ENCODE measurements at regions of chr6 and their contacts with region 1.

Region 1: DNA sequence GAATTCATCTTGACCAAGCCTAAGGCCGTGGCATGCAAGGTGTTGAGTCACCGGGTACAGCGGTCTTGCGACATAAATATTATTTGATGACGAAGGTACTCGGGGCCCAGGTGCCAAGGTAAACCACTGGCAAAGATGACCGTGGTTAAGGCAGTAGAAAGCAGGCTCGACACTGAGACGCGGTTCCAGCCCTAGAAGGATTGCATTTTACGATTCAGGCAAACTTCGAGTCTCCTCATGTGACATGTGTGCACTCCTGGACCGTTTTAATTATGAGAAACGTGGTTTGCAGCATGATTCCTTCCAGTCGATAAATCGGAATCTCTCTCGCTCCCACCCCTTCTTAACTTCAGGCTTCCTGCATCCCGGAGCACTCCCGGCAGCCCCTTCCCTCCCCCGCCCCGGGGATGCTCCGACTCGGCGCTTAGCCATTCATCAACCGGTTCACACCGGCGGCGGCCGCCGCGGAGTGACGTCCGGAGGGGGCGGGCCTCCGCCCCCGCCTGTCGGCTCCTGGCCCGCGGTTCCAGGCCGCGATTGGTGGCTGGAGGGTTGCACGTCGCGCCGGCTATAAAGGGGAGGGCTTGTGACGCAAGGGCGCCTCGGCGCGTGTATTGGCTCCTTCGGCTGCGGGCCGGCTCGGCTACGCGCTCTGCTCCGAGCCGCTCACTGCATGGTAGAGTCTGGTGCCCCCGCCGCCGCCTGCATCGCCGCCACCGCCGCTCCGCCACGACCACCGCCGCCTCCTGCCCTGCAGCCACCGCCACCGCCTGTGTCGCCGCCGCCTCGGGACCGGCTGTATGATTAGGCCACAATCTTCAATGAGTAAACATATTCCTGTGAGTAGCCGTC is at the starts of genes LOC128125822 and PTP4A1:
- DNase-seq: peak; percentile 93 to 98
- H3K4me3 ChIP-seq: peak within 1 kb of the TSS; percentile 67
- H3K27ac ChIP-seq: peak within 1 kb of the TSS; percentile 97
- H3K4me1 ChIP-seq: peaks cover 28% of the 10 kb centered on the region
- H3K27me3 ChIP-seq: no peaks in the 10 kb centered on the region
- CTCF ChIP-seq: no peak
- total RNA-seq, gene PTP4A1: 46.4 and 63.8 TPM in 2 replicates

Region 2: DNA sequence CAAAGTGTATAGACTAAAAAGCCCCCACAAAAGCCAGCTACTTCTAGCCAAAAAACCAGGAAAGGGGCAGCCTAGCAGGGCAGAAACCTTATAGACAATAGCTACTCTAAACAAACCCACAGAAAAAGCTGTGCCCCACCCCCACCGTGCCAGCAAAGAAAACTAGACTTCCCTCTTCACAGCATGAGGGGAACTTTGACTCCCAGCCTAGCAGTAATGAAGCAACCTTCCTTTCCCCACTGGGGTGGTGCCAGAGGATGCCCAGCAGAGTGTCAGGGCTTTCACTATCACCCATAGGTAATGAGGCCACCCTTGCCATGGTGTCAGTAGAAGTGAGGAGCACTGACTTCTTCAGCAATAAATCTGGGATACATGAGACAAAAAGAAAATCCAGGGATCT is 153.4 kb before region 1 on chr6:
- CTCF ChIA-PET with region 1: no interaction called
- POLR2A ChIA-PET with region 1: no interaction called
- intact Hi-C with region 1: loop called (anchors 10 kb)
- DNase-seq: no peak
- H3K4me3 ChIP-seq: no peak overlapping the region
- H3K27ac ChIP-seq: no peak overlapping the region
- H3K4me1 ChIP-seq: no peaks in the 10 kb centered on the region
- H3K27me3 ChIP-seq: no peaks in the 10 kb centered on the region
- CTCF ChIP-seq: no peak

Region 3: GRCh38 chr6:63527658-63528514 is 44.2 kb before region 1 on chr6:
- CTCF ChIA-PET with region 1: interaction called, 3 read pairs
- POLR2A ChIA-PET with region 1: interaction called, 4 read pairs
- intact Hi-C with region 1: loop called (anchors 1 kb)
- DNase-seq: peak; percentile 77 to 92
- H3K4me3 ChIP-seq: no peak overlapping the region
- H3K27ac ChIP-seq: peak overlapping the region; percentile 43
- H3K4me1 ChIP-seq: peaks cover 24% of the 10 kb centered on the region
- H3K27me3 ChIP-seq: no peaks in the 10 kb centered on the region
- CTCF ChIP-seq: no peak

Region 4: DNA sequence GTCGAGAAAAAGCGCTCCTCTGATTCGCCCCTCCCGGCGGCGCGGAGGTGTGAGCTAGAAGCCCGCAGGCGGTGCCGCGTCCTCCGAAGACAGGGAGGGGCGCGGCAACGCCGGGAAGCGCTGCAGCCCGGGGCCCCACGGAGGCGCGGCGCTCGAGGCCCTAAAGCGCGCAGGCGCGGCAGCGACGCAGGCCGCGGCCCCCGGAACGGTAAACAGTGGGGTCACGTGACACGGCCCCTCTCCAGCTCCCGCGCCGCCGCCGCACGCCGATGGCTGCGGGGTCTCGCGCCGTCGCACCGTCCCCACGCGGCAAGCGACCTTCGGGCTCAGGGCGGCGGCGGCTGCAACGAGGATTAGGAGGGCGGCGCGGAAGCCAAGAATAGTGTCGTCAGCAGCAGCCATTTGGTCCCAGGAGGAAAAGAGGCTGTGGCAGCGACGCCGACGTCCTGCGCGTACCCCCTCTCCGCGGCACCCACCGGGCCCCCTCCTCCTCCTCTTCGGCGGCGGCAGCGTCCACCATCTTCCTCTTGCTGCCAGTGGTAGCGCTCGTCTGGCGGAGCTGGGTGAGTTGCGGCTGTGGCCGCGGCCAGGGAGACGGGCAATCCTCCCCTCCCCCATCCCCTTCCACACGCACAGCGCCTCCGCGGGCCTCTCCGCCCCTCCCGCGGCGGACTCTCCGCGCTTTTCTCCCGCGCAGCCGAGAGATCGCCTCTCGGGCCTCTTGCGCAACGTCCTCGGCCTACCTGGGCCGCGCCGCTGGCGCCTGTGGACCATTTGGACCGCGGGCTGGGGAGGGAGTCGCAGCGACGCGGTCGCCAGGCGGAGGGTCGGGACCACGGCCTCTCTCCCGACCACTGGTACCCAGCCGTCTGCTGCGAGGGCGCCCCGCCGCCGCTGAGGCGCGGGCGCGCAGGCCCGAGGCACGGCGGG is 63.7 kb after region 1 on chr6 and contains the start of gene PHF3:
- CTCF ChIA-PET with region 1: no interaction called
- POLR2A ChIA-PET with region 1: interaction called, 3 read pairs
- intact Hi-C with region 1: loop called (anchors 5 kb)
- DNase-seq: peak; percentile 61 to 92
- H3K4me3 ChIP-seq: peak within 1 kb of the TSS; percentile 68
- H3K27ac ChIP-seq: peak within 1 kb of the TSS; percentile 73
- H3K4me1 ChIP-seq: peaks cover 37% of the 10 kb centered on the region
- H3K27me3 ChIP-seq: no peaks in the 10 kb centered on the region
- CTCF ChIP-seq: no peak; the same call in 1 of the 2 replicates
- total RNA-seq, gene PHF3: 59.8 and 67.1 TPM in 2 replicates

Measured in PC-9 (cell line).